IMR-90 (cell line): ENCODE measurements at regions of chr12 and their contacts with region 1.

Region 1: DNA sequence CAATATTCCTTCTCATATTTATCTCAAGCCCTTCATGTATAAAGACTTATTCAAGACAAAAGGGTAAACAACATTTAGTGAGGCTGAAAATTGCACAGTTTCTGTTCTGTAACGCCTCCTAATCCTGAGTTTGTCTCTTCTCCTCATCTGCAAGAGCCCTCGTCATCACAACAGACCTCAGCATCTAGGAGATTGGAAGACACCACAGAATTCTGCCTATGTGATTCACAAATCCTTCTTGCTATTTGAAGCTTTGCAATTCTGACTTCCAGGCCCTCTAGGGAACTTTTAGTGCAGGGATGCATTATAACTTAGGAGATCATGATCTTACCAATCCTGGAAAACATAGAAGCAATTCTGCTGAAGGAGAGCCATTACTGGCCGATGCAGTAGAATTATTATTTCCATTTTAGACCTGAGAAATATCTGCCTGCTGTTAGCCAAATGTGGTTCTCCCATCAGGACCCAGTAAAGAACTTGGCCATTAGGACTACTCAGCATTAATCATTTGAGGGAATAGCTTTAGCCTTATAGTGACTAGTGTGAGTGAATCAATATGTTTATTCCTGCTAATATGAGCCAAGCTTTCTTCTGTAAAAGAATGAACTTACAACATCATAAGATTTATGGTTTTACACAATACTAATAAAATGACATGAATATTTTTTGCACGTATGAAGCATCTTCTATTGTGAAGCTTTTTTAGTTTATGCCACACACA is 119.5 kb downstream of the ANO4 start:
- DNase-seq: peak; percentile 37
- ATAC-seq: peak; percentile 61
- H3K4me3 ChIP-seq: no peak overlapping the region
- H3K27ac ChIP-seq: no peak overlapping the region
- H3K4me1 ChIP-seq: no peaks in the 10 kb centered on the region
- H3K27me3 ChIP-seq: no peaks in the 10 kb centered on the region
- CTCF ChIP-seq: no peak
- POLR2A ChIP-seq: no peak
- RAD21 ChIP-seq: no peak

Region 2: DNA sequence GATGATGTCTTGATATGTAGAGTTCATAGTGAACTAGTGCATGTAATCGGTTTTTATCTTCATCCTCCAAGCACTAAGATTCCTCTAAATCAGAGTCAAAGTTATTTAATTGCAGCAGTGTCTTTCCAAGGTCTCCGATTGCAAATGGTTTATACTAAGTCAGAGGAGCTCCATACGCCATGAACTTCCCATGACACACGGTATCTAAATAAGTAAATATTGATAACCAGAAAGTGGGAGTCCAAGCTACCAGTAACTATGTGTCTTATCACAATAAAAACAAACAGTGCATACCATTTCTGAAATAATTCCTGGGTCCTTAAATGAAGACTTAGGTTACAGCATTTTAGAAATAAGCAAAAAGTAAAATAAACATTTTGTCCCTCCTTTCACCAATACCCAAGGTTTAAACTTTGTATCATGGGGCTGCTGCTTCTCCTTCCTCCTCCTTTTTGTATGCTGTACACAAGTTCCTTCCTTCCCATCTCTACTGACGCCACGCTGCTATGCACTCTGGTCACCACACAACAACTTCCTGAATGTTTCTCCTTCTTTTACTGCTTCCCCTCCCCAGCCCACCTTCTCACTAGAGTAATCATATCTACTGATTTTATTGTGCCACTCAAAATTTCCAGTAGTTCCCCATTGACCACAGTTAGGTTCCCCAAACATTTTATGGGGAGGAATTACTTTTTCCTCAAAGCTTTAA is 429.7 kb before region 1 on chr12:
- CTCF ChIA-PET with region 1: no interaction called
- POLR2A ChIA-PET with region 1: no interaction called
- dilution Hi-C with region 1: no loop called
- in situ Hi-C with region 1: no loop called
- intact Hi-C with region 1: no loop called
- DNase-seq: peak; percentile 40
- ATAC-seq: peak; percentile 78
- H3K4me3 ChIP-seq: no peak overlapping the region
- H3K27ac ChIP-seq: no peak overlapping the region
- H3K4me1 ChIP-seq: no peaks in the 10 kb centered on the region
- H3K27me3 ChIP-seq: peaks cover 2% of the 10 kb centered on the region; the same call in 1 of the 2 replicates
- CTCF ChIP-seq: no peak
- POLR2A ChIP-seq: no peak
- RAD21 ChIP-seq: no peak

Region 3: GRCh38 chr12:100827901-100828520 is 86.0 kb before region 1 on chr12:
- CTCF ChIA-PET with region 1: no interaction called
- POLR2A ChIA-PET with region 1: no interaction called
- dilution Hi-C with region 1: no loop called
- in situ Hi-C with region 1: no loop called
- intact Hi-C with region 1: no loop called
- DNase-seq: peak; percentile 54
- ATAC-seq: peak; percentile 38; the same call in 1 of the 2 replicates
- H3K4me3 ChIP-seq: no peak overlapping the region
- H3K27ac ChIP-seq: no peak overlapping the region
- H3K4me1 ChIP-seq: no peaks in the 10 kb centered on the region
- H3K27me3 ChIP-seq: no peaks in the 10 kb centered on the region
- CTCF ChIP-seq: peak; percentile 78
- POLR2A ChIP-seq: no peak
- RAD21 ChIP-seq: peak; percentile 88

Region 4: DNA sequence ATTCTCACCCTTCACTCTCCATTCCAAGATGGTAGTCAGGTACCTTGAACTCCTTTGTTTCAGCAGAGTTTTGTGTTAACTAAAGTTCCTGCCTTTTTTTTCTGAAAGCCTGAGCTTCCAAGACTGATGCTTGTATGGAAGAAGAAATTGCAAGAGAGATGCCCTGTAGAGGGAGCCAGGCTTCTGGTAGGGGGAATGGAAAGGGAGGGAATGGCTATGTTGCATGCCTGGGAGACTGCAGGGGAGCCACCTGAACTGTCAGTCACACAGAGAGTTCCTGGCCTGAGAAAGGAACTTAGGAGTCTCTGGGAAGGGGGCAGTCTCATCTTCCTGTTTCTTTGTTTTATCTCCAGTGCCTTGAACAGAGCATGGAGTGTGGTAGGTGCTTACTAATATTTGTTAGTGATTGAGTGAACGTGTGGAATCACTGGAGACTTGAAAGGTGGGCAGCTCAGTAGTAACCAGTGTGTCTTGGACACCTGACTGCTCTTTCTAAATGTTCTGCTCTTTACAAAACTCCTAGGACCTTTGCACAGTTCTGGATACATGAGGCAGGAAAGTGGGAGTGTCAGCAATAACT is 12.7 kb after region 1 on chr12:
- CTCF ChIA-PET with region 1: no interaction called
- POLR2A ChIA-PET with region 1: no interaction called
- dilution Hi-C with region 1: no loop called
- in situ Hi-C with region 1: no loop called
- intact Hi-C with region 1: no loop called
- DNase-seq: peak; percentile 14
- ATAC-seq: no peak
- H3K4me3 ChIP-seq: no peak overlapping the region
- H3K27ac ChIP-seq: no peak overlapping the region
- H3K4me1 ChIP-seq: peaks cover 1% of the 10 kb centered on the region; the same call in 1 of the 2 replicates
- H3K27me3 ChIP-seq: no peaks in the 10 kb centered on the region
- CTCF ChIP-seq: peak; percentile 27; the same call in 1 of the 2 replicates
- POLR2A ChIP-seq: no peak
- RAD21 ChIP-seq: peak; percentile 21; the same call in 1 of the 2 replicates

Region 5: GRCh38 chr12:101051901-101052550 is 138.0 kb after region 1 on chr12:
- CTCF ChIA-PET with region 1: no interaction called
- POLR2A ChIA-PET with region 1: no interaction called
- dilution Hi-C with region 1: no loop called
- in situ Hi-C with region 1: no loop called
- intact Hi-C with region 1: no loop called
- DNase-seq: peak; percentile 81
- ATAC-seq: peak; percentile 93
- H3K4me3 ChIP-seq: no peak overlapping the region
- H3K27ac ChIP-seq: peak overlapping the region; percentile 48; the same call in 1 of the 2 replicates
- H3K4me1 ChIP-seq: peaks cover 4% of the 10 kb centered on the region
- H3K27me3 ChIP-seq: no peaks in the 10 kb centered on the region
- CTCF ChIP-seq: no peak
- POLR2A ChIP-seq: no peak
- RAD21 ChIP-seq: no peak

Region 6: DNA sequence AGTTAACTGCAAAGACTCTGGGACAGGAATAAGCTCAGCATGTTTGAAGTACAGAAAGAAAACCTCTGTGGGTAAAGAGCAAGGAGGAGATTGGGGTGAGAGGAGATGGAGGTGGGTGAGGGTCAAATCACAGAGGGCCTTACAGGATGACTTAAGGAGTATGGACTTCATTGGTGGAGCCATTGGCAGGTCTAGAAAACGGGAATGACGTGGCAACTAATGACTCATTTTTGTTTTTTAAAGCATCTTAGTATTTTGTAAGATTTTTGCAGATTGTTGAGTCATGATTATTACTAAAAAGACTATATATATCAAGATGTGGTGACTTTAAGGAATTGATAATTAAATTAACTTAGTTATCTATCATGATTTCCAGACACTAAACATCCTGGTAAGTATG is 384.4 kb after region 1 on chr12:
- CTCF ChIA-PET with region 1: no interaction called
- POLR2A ChIA-PET with region 1: no interaction called
- dilution Hi-C with region 1: no loop called
- in situ Hi-C with region 1: no loop called
- intact Hi-C with region 1: loop called (anchors 10 kb)
- DNase-seq: peak; percentile 82
- ATAC-seq: peak; percentile 59; the same call in 1 of the 2 replicates
- H3K4me3 ChIP-seq: no peak overlapping the region
- H3K27ac ChIP-seq: no peak overlapping the region
- H3K4me1 ChIP-seq: no peaks in the 10 kb centered on the region; the same call in 1 of the 2 replicates
- H3K27me3 ChIP-seq: no peaks in the 10 kb centered on the region
- CTCF ChIP-seq: no peak
- POLR2A ChIP-seq: no peak
- RAD21 ChIP-seq: no peak